ENCODE measurements at regions of chr14 and their contacts with region 1.

Region 1: GRCh38 chr14:99939421-99939939 is 125.7 kb upstream of the EVL start:
- DNase-seq: no peak
- H3K4me3 ChIP-seq: no peak overlapping the region
- H3K27ac ChIP-seq: no peak overlapping the region
- H3K27me3 ChIP-seq: no peaks in the 10 kb centered on the region
- CTCF ChIP-seq: no peak

Region 2: GRCh38 chr14:99971087-99971940 is 31.8 kb after region 1 on chr14:
- intact Hi-C with region 1: loop called in 1 of 2 experiments (anchors 1 kb)
- DNase-seq: peak; percentile 67 to 85 (median 78)
- H3K4me3 ChIP-seq: peak overlapping the region; percentile 40 to 92 (median 81)
- H3K27ac ChIP-seq: peak overlapping the region in 48 of 59 donors; percentile 38 to 90 (median 75)
- H3K27me3 ChIP-seq: no peaks in the 10 kb centered on the region
- CTCF ChIP-seq: peak in 24 of 56 donors; percentile 5 to 35 (median 21)

Region 3: DNA sequence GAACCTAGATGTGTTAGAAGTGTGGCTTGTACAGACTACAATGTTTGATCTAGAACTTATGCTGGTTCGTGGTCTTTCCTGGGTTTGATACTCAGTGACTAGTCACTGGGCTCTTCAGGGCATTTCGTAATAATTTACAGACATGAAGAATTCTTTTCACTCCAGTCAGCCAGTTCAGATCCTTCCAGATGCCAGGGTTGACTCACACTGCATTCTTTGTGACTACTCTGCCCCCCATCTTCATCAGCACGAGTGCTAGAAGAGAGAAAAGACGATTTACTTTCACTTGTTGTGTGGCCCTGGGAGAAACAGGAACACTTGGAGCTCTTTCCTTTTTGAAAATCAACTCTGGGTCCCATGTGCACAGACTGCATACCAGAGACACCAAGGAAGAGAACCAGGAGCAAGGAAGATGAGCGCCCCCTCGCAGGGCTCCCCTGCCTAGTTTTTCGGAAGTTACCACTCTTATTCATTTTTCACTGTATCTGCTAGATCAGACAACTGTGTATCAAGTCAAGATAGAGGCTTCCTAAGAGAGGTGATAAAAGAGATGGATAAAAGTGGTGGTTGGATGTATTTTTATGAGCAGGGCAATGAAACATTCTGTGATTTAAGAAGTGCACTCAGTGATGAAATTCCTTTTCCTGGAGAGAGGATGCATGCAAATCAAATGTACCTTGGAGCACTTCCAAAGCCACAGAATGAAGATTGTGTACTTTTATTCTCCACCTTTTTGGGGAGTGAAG is 92.2 kb after region 1 on chr14:
- intact Hi-C with region 1: no loop called
- DNase-seq: peak in 3 of 10 donors; percentile 36 to 54 (median 37)
- H3K4me3 ChIP-seq: peak overlapping the region in 38 of 59 donors; percentile 2 to 42 (median 21)
- H3K27ac ChIP-seq: peak overlapping the region in 42 of 59 donors; percentile 0 to 76 (median 39)
- H3K27me3 ChIP-seq: no peaks in the 10 kb centered on the region
- CTCF ChIP-seq: peak in 1 of 56 donors; percentile 14

Region 4: DNA sequence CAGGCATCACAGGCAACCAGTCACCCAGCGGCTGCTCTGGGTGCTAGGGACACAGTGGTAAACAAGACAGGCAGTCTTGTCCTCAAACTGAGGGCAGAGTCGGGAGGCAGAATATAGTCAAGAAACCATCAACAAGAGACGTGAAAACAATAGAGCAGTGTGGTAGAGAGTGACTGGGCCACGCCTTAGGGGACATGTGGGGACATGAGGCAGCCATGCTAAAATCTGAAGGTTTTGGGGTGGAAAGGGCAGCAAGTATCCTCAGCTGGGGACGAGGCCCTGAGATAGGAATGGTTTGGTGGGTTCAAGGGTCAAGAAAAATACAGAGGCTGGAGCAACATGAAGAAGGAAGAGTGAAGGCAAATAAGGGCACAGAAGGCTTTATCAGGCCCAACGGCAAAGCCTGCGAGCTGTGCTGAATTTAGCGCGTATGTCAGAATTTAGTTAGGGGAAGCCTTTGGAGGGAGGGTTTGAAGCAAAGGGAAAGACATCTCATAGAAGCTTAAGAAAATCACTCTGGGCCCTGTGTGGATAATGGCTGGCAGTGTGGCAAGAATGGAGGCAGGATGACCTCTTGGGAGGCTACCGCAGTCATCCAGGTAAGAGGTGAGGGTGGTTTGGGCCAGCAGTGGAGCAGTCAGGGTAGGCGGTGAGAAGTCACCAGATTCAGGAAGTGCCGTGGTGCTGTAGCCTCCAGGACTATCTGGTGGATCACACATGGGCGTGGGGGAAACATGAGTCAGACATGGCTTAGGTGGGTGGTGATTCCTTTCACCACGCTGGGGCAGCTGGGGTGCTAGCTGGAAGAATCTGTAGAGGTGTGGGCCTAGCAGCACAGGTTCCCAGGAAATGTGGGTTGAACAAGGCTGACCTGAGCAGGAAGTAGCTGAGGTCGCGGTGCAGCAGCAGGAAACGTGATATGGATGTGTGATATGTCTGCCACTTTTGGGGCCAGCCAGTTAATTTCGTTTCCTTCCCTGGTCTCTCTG is 128.8 kb after region 1 on chr14:
- intact Hi-C with region 1: no loop called
- DNase-seq: peak in 6 of 10 donors; percentile 55 to 80 (median 61)
- H3K4me3 ChIP-seq: peak overlapping the region in 21 of 59 donors; percentile 4 to 38 (median 16)
- H3K27ac ChIP-seq: peak overlapping the region in 52 of 59 donors; percentile 6 to 81 (median 55)
- H3K27me3 ChIP-seq: no peaks in the 10 kb centered on the region
- CTCF ChIP-seq: no peak

Measured in dorsolateral prefrontal cortex (tissue), 120 donors.